OCI-LY7 (cell line): ENCODE measurements at regions of chr4 and their contacts with region 1.

Region 1: DNA sequence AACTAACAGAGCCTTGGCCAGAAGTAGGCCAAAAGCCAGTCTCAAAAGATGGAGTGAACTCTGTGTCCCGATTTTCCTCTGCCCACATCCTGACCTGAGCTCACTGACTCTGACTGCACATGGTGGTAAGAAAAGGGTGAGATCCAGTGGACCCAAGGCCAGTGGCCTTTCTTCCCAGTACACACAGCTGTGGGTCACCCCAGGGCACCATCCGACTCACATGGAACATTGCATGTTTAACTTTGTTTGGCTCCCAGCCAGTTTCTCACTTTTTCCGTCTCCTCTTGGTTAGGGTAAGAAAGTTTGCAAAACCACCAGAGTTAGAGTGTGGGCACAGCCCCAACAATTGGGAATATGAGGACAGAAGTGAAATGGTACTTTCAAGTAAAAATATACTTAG is 69.8 kb downstream of the GAB1 start:
- DNase-seq: no peak
- H3K4me3 ChIP-seq: no peak overlapping the region
- H3K27ac ChIP-seq: peak overlapping the region; percentile 97
- H3K4me1 ChIP-seq: peaks cover 99% of the 10 kb centered on the region
- CTCF ChIP-seq: no peak

Region 2: DNA sequence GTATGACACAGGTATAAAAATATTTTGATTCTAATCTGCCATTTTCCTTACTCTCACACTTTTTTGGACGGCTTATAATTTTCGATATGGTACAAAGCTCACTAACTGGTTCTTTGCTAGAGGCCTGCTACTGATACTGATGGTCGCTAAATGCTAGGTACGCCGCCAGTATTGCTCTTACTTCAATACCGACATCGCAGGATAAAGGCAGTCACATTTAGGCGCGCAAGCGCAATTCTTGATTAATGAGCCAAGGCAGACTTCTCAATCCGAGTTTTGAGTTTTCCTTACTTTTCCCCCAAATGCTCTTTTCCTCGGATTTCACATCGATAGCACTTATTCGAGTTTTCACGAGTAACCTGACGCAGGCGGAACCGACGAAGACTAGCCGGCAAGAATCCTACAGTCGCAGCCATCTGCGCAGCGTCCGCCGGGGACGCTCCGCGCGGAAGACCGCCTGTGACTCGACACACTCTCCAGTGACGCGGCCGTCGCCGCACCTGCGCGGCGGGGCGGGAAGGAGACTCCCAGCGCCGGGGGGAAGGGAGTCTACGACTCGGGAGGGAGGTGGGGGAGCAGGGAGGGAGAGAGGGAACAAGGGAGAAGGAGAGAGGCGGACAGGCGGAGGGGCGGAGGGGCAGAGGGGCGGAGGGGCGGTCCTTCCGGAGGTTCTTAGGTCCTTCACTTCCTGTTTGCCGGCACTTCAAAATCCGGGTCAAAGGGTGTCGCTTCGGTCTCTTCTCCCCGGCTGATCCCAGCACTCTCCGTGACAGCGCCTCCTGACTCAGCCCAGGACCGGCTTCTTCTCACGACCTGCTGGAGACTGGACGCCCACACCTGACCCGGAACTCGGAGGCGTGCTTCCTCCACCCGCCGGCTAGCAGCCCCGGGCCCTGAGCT is 222.1 kb before region 1 on chr4 and contains the start of gene USP38:
- CTCF ChIA-PET with region 1: no interaction called
- POLR2A ChIA-PET with region 1: no interaction called
- intact Hi-C with region 1: loop called (anchors 5 kb)
- DNase-seq: peak; percentile 90
- H3K4me3 ChIP-seq: peak within 1 kb of the TSS; percentile 94
- H3K27ac ChIP-seq: peak within 1 kb of the TSS; percentile 75
- H3K4me1 ChIP-seq: peaks cover 29% of the 10 kb centered on the region
- CTCF ChIP-seq: 0 out of 2 replicates have a peak, but pooled peaks have one; percentile 46
- total RNA-seq, gene USP38: 21.8 and 23.6 TPM in 2 replicates

Region 3: GRCh38 chr4:143358923-143359643 is 47.4 kb before region 1 on chr4:
- CTCF ChIA-PET with region 1: no interaction called
- POLR2A ChIA-PET with region 1: interaction called, 22 read pairs
- intact Hi-C with region 1: loop called (anchors 1 kb)
- DNase-seq: peak; percentile 91
- H3K4me3 ChIP-seq: peak overlapping the region; percentile 61
- H3K27ac ChIP-seq: peak overlapping the region; percentile 98
- H3K4me1 ChIP-seq: peaks cover 96% of the 10 kb centered on the region
- CTCF ChIP-seq: no peak

Region 4: GRCh38 chr4:143389579-143390195 is 16.8 kb before region 1 on chr4:
- CTCF ChIA-PET with region 1: interaction called, 9 read pairs
- POLR2A ChIA-PET with region 1: interaction called, 152 read pairs
- intact Hi-C with region 1: loop called (anchors 1 kb)
- DNase-seq: no peak
- H3K4me3 ChIP-seq: peak overlapping the region; percentile 5
- H3K27ac ChIP-seq: peak overlapping the region; percentile 96
- H3K4me1 ChIP-seq: peaks cover 80% of the 10 kb centered on the region
- CTCF ChIP-seq: no peak

Region 5: GRCh38 chr4:143424276-143424675 is 17.8 kb after region 1 on chr4:
- CTCF ChIA-PET with region 1: interaction called, 5 read pairs
- POLR2A ChIA-PET with region 1: interaction called, 104 read pairs
- intact Hi-C with region 1: no loop called
- DNase-seq: no peak
- H3K4me3 ChIP-seq: no peak overlapping the region
- H3K27ac ChIP-seq: peak overlapping the region; percentile 55
- H3K4me1 ChIP-seq: peaks cover 71% of the 10 kb centered on the region
- CTCF ChIP-seq: no peak

Region 6: DNA sequence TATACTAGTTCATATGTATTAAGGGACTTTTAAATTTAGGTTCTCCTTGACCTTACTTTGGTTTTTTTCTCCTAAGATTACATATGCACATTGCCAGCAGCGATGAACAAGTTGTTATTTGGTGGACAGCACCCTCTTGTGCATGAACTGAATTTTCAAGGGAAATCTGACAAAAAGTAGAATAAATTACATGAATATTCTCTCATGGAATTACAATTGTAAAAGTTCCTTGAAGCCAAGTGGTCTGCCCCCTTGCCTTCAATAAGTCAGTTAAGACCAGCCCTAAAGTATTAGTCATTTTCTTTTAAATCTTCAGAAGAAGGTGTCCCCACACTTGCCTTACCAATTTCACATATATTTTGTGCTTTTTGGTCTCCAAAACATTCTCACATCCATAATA is 76.3 kb after region 1 on chr4:
- CTCF ChIA-PET with region 1: interaction called, 3 read pairs
- POLR2A ChIA-PET with region 1: interaction called, 20 read pairs
- intact Hi-C with region 1: loop called (anchors 1 kb)
- DNase-seq: peak; percentile 77
- H3K4me3 ChIP-seq: no peak overlapping the region
- H3K27ac ChIP-seq: no peak overlapping the region
- H3K4me1 ChIP-seq: peaks cover 15% of the 10 kb centered on the region
- CTCF ChIP-seq: peak; percentile 91